CD8-positive, alpha-beta T cell (primary cell): ENCODE measurements at regions of chr5 and their contacts with region 1.

Region 1: GRCh38 chr5:122101636-122102285 is 23.7 kb upstream of the LOX start:
- DNase-seq: peak in 1 of 9 experiments; percentile 11
- ATAC-seq: no peak
- H3K4me3 ChIP-seq: no peak overlapping the region
- H3K4me3 Mint-ChIP-seq: no peak overlapping the region
- H3K27ac ChIP-seq: no peak overlapping the region
- H3K27ac Mint-ChIP-seq: no peak overlapping the region
- H3K4me1 ChIP-seq: no peaks in the 10 kb centered on the region
- H3K4me1 Mint-ChIP-seq: no peaks in the 10 kb centered on the region
- H3K27me3 ChIP-seq: peaks cover 0 to 2% of the 10 kb centered on the region in 2 experiments
- H3K27me3 Mint-ChIP-seq: no peaks in the 10 kb centered on the region
- CTCF ChIP-seq: peak; percentile 35

Region 2: GRCh38 chr5:120655828-120656435 is 1445.8 kb before region 1 on chr5:
- CTCF ChIA-PET with region 1: no interaction called
- POLR2A ChIA-PET with region 1: no interaction called
- intact Hi-C with region 1: loop called in 1 of 2 experiments (anchors 5 kb)
- DNase-seq: peak in 1 of 9 experiments; percentile 0
- ATAC-seq: no peak
- H3K4me3 ChIP-seq: no peak overlapping the region
- H3K4me3 Mint-ChIP-seq: no peak overlapping the region
- H3K27ac ChIP-seq: no peak overlapping the region
- H3K27ac Mint-ChIP-seq: no peak overlapping the region
- H3K4me1 ChIP-seq: no peaks in the 10 kb centered on the region
- H3K4me1 Mint-ChIP-seq: no peaks in the 10 kb centered on the region
- H3K27me3 ChIP-seq: no peaks in the 10 kb centered on the region
- H3K27me3 Mint-ChIP-seq: no peaks in the 10 kb centered on the region
- CTCF ChIP-seq: no peak

Region 3: GRCh38 chr5:121572061-121572460 is 529.7 kb before region 1 on chr5:
- CTCF ChIA-PET with region 1: no interaction called
- POLR2A ChIA-PET with region 1: no interaction called
- intact Hi-C with region 1: no loop called
- DNase-seq: no peak
- ATAC-seq: no peak
- H3K4me3 ChIP-seq: no peak overlapping the region
- H3K4me3 Mint-ChIP-seq: no peak overlapping the region
- H3K27ac ChIP-seq: no peak overlapping the region
- H3K27ac Mint-ChIP-seq: no peak overlapping the region
- H3K4me1 ChIP-seq: no peaks in the 10 kb centered on the region
- H3K4me1 Mint-ChIP-seq: no peaks in the 10 kb centered on the region
- H3K27me3 ChIP-seq: no peaks in the 10 kb centered on the region
- H3K27me3 Mint-ChIP-seq: no peaks in the 10 kb centered on the region
- CTCF ChIP-seq: no peak

Region 4: DNA sequence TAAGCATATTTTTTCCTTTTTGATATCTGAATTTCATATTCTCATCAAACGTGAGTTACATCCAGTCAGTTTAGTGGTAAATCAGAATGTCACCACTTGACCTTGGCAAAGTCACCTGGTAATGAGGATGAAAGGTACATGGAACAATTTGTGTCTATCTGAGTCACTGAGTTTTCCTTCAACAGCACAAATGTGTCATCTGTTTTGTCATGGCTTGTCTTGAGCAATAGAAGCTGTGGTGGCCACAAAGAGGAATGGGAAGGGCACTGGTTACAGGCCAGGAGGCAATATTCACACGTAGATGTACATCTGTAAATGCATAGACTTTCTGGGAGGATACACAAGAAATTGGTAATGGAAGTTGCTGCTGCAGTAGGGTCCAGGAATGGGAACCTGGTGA is 19.2 kb after region 1 on chr5:
- CTCF ChIA-PET with region 1: no interaction called
- POLR2A ChIA-PET with region 1: no interaction called
- intact Hi-C with region 1: no loop called
- DNase-seq: no peak
- ATAC-seq: no peak
- H3K4me3 ChIP-seq: no peak overlapping the region
- H3K4me3 Mint-ChIP-seq: no peak overlapping the region
- H3K27ac ChIP-seq: no peak overlapping the region
- H3K27ac Mint-ChIP-seq: no peak overlapping the region
- H3K4me1 ChIP-seq: no peaks in the 10 kb centered on the region
- H3K4me1 Mint-ChIP-seq: no peaks in the 10 kb centered on the region
- H3K27me3 ChIP-seq: no peaks in the 10 kb centered on the region
- H3K27me3 Mint-ChIP-seq: no peaks in the 10 kb centered on the region
- CTCF ChIP-seq: no peak